Heart right ventricle (tissue), 16 donors: ENCODE measurements at regions of chr7 and their contacts with region 1.

Region 1: DNA sequence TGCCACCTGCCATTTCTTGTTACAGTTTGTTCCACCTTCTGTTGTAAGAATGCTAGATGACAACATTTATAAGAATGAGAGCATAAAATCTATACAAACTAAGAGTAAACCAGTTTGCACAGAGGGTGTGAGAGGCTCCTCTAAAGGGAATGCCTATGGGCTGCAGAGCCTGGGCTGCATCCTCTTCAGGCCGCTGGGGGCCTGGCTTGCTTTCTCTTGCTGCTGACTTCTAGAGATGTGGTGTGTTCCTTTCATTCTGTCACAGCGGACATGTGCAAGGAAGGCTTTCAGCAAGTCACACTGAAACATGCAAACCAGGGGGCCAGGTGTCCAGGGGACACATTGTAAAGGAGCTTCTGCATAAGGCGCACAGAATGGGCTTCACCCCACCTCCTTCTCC is 7.1 kb upstream of the ATP6V1F start:
- DNase-seq: no peak
- ATAC-seq: no peak
- H3K4me3 ChIP-seq: no peak overlapping the region
- H3K27ac ChIP-seq: no peak overlapping the region
- H3K4me1 ChIP-seq: peaks cover 15 to 57% (median 21%) of the 10 kb centered on the region in 9 donors
- H3K27me3 ChIP-seq: no peaks in the 10 kb centered on the region
- CTCF ChIP-seq: no peak

Region 2: DNA sequence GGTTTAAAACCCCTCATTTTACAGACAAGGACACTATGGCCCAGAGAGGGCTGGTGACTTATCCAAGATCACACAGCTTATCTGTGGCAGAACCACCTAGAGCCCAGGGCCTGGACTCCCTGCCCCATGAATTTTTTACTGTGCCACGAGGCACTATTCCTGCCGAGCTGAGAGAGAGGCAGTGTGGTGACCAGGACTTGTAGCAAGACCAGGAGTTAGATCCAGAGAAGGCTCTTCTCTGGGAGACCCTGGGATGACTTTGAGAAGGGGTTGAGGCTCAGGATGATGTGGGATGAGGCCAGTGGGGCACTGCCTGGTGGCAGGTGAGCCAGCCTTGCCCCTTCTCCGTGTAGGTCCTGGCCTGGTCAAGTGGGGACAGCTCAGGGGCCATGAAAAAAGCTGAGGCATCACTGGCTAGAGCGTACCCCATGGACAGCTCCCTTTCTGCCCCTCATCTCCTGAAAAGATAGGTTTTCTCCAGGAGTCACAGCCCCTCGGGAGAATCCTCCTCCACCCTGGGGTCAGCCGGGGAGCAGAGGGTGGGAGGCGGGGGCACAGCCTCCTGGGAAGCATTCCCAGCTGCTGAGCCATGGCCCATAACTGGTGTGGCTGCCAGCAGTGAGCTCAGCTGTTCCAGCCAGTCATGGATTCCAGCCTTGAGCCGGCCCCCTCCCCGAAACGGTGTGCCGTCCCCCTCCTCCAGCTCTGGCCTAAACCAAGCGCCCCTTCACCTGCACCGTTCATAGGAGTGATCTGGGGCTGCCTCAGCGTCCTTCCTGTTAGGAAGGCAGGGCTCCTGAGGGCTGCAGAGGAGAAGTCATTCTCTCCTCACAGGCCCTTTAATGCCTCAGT is 19.5 kb before region 1 on chr7:
- intact Hi-C with region 1: loop called in 2 of 10 experiments (anchors 2 kb)
- DNase-seq: peak; percentile 34 to 51
- ATAC-seq: peak in 7 of 8 donors; percentile 2 to 25 (median 9)
- H3K4me3 ChIP-seq: peak overlapping the region in 2 of 10 donors; percentile 5 to 85
- H3K27ac ChIP-seq: peak overlapping the region in 9 of 10 donors; percentile 5 to 99 (median 96)
- H3K4me1 ChIP-seq: peaks cover 20 to 88% (median 46%) of the 10 kb centered on the region in 9 donors
- H3K27me3 ChIP-seq: peaks cover 0 to 22% (median 0%) of the 10 kb centered on the region in 7 donors
- CTCF ChIP-seq: no peak